ENCODE measurements at regions of chr5 and their contacts with region 1.

Region 1: DNA sequence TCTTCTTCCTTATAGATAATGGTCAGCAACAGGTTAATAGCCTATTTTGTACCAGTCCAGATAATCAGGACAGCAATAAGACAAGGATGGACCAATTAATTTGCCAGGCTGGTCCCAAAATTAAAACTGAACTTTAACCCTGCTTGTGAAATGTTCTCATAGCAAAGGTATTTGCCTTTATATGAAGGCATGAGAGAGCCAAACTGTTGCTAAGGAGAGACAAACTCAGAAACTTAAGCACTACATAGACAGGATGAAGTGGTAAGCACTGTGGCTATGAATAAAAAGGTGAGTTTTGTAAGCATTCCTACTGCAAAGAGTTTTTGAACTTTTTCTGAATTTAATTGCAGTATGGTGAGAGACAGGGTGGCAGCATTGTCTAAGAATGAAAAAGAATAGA is 174.7 kb upstream of the PPP1R2B start:
- DNase-seq: no peak
- ATAC-seq: no peak
- H3K4me3 ChIP-seq: no peak overlapping the region
- H3K27ac ChIP-seq: no peak overlapping the region
- H3K4me1 ChIP-seq: peaks cover 7% of the 10 kb centered on the region
- H3K27me3 ChIP-seq: 0 out of 2 replicates have a peak, but pooled peaks cover 3% of the 10 kb centered on the region
- CTCF ChIP-seq: no peak

Region 2: GRCh38 chr5:156762771-156763170 is 87.4 kb after region 1 on chr5:
- CTCF ChIA-PET with region 1: no interaction called
- POLR2A ChIA-PET with region 1: no interaction called
- intact Hi-C with region 1: no loop called
- DNase-seq: no peak
- ATAC-seq: no peak
- H3K4me3 ChIP-seq: no peak overlapping the region
- H3K27ac ChIP-seq: no peak overlapping the region
- H3K4me1 ChIP-seq: no peaks in the 10 kb centered on the region
- H3K27me3 ChIP-seq: peaks cover 24% of the 10 kb centered on the region
- CTCF ChIP-seq: no peak

Region 3: DNA sequence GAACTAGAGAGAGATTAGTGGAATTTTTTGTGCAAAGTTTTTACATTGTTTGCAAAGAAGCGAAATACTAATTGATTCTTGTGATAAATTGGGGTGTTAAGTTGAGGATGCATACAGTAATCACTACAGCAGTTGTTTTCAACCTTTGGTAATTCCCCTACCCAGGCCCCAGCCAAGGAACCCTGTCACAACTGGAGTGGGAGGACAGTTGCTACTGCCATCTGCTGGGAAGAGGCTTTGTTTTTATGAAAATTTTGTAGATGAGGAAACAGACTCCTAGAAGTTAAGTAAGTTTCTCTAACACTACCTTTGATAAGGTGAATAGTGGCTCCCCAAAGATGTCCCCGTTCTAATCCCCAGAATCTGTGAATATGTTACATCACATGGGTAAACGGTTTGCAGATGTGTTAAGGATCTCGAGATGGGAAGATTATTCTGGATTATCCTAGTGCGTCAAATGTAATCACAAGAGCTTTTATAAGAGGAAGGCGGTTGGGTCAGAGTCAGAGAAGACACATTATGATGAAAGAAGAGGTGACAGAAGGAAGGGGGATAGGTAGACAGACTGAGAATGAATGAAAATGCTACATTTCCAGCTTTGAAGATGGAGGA is 140.7 kb after region 1 on chr5:
- CTCF ChIA-PET with region 1: no interaction called
- POLR2A ChIA-PET with region 1: no interaction called
- intact Hi-C with region 1: loop called (anchors 5 kb)
- DNase-seq: peak; percentile 63
- ATAC-seq: peak; percentile 68
- H3K4me3 ChIP-seq: no peak overlapping the region
- H3K27ac ChIP-seq: no peak overlapping the region
- H3K4me1 ChIP-seq: no peaks in the 10 kb centered on the region
- H3K27me3 ChIP-seq: no peaks in the 10 kb centered on the region
- CTCF ChIP-seq: peak; percentile 71

Region 4: DNA sequence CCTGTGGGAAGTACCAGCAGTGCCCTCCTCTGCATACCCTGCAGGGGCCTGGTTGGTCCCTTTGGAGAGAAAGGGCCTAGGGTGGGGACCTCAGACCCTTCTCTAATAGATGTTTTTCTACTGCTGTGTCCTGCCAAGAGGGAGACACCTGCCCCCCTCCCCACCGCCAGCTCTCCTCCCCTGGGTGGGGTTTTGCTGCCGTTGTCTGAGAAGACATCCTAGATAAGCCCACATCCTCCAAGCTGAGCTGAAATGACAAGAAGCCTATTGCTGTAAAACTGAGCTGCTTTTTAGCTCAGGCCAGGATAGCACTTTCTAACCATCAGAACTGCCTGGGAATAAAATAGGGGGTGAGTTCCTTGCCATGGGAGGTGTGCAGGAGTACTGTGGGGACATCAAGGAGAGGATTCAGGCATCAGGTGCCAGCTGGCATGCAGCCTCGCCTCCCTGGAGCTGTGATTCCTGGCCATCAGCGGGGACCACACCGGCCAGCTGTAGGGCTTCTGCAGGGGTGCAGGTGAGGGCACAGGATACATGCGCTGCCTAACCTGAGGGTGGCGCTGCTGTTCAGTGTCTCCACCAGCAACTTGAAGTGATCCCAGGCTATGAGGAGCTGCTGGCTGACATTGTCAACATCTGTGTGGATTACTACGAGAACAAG is 628.4 kb after region 1 on chr5:
- CTCF ChIA-PET with region 1: no interaction called
- POLR2A ChIA-PET with region 1: no interaction called
- intact Hi-C with region 1: loop called (anchors 5 kb)
- DNase-seq: peak; percentile 57
- ATAC-seq: peak; percentile 60
- H3K4me3 ChIP-seq: no peak overlapping the region
- H3K27ac ChIP-seq: no peak overlapping the region
- H3K4me1 ChIP-seq: no peaks in the 10 kb centered on the region
- H3K27me3 ChIP-seq: no peaks in the 10 kb centered on the region
- CTCF ChIP-seq: peak; percentile 83

Measured in PC-3 (cell line).